CD8-positive, alpha-beta memory T cell (primary cell): ENCODE measurements at regions of chr12 and their contacts with region 1.

Region 1: GRCh38 chr12:101839324-101840283 is 8.8 kb upstream of the GNPTAB start:
- DNase-seq: peak; percentile 46 to 78 (median 59)
- H3K4me3 ChIP-seq: no peak overlapping the region
- H3K4me3 Mint-ChIP-seq: peak overlapping the region in 2 of 7 donors; percentile 42 to 52
- H3K27ac ChIP-seq: no peak overlapping the region
- H3K27ac Mint-ChIP-seq: peak overlapping the region in 3 of 8 donors; percentile 76 to 84 (median 79)
- H3K4me1 ChIP-seq: peaks cover 11% of the 10 kb centered on the region
- H3K4me1 Mint-ChIP-seq: peaks cover 10 to 19% (median 18%) of the 10 kb centered on the region in 3 donors
- H3K27me3 ChIP-seq: no peaks in the 10 kb centered on the region
- H3K27me3 Mint-ChIP-seq: peaks cover 0 to 3% of the 10 kb centered on the region in 2 donors

Region 2: GRCh38 chr12:101773650-101774162 is 65.9 kb before region 1 on chr12:
- CTCF ChIA-PET with region 1: interaction called, 119 read pairs
- POLR2A ChIA-PET with region 1: no interaction called
- DNase-seq: peak; percentile 43 to 75 (median 62)
- H3K4me3 ChIP-seq: no peak overlapping the region
- H3K4me3 Mint-ChIP-seq: no peak overlapping the region
- H3K27ac ChIP-seq: no peak overlapping the region
- H3K27ac Mint-ChIP-seq: peak overlapping the region in 1 of 8 donors; percentile 43
- H3K4me1 ChIP-seq: no peaks in the 10 kb centered on the region
- H3K4me1 Mint-ChIP-seq: peaks cover 0 to 7% (median 1%) of the 10 kb centered on the region in 3 donors
- H3K27me3 ChIP-seq: no peaks in the 10 kb centered on the region
- H3K27me3 Mint-ChIP-seq: no peaks in the 10 kb centered on the region

Region 3: GRCh38 chr12:101782273-101782731 is 57.3 kb before region 1 on chr12:
- CTCF ChIA-PET with region 1: interaction called, 35 read pairs
- POLR2A ChIA-PET with region 1: no interaction called
- DNase-seq: no peak
- H3K4me3 ChIP-seq: no peak overlapping the region
- H3K4me3 Mint-ChIP-seq: no peak overlapping the region
- H3K27ac ChIP-seq: no peak overlapping the region
- H3K27ac Mint-ChIP-seq: peak overlapping the region in 5 of 8 donors; percentile 2 to 63 (median 45)
- H3K4me1 ChIP-seq: no peaks in the 10 kb centered on the region
- H3K4me1 Mint-ChIP-seq: peaks cover 5 to 12% (median 6%) of the 10 kb centered on the region in 3 donors
- H3K27me3 ChIP-seq: no peaks in the 10 kb centered on the region
- H3K27me3 Mint-ChIP-seq: no peaks in the 10 kb centered on the region

Region 4: DNA sequence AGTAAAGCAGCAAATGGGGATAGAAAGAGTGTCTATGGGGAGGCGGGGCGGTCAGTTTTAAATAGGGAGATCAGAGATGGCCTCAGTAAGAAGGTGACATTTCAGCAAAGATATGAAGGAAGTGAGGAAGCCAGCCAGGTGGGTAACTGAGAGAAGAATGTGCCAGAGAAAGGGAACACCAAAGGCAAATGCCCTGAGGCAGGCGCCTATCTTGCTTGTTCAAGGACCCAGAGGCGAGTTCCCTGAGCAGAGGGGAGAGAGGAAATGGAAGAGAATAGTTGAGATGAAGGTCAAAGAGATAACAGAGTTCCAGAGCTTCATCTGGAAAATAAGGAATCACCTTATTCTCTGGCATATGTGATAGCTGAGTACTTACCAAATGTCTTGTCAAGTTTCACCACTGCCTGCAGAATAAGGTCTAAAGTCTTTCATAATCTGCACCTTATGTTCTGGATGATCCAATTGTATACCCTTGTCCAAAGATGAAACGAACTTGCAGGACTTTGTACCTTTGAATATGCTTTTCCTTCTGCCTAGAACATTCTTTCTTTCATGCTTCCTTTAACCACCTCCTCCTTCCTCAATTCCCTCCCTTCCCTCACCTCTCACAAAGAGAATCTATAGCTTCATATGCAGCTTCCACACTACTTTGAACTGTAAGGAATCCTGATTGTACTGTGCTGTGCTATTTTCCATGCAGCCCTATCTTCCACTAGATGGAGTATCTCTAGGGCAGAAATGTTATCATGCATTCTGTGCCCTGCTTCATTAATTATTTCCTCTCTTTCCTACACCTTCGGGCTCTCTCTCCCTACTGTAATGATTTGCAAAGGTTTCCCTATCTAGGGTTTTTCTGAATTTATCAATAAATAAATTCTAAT is 47.3 kb before region 1 on chr12:
- CTCF ChIA-PET with region 1: interaction called, 36 read pairs
- POLR2A ChIA-PET with region 1: no interaction called
- DNase-seq: no peak
- H3K4me3 ChIP-seq: no peak overlapping the region
- H3K4me3 Mint-ChIP-seq: peak overlapping the region in 2 of 7 donors; percentile 12 to 45
- H3K27ac ChIP-seq: no peak overlapping the region
- H3K27ac Mint-ChIP-seq: peak overlapping the region in 7 of 8 donors; percentile 10 to 84 (median 62)
- H3K4me1 ChIP-seq: peaks cover 7% of the 10 kb centered on the region
- H3K4me1 Mint-ChIP-seq: peaks cover 25 to 39% (median 32%) of the 10 kb centered on the region in 3 donors
- H3K27me3 ChIP-seq: no peaks in the 10 kb centered on the region
- H3K27me3 Mint-ChIP-seq: no peaks in the 10 kb centered on the region

Region 5: GRCh38 chr12:101823891-101824290 is 15.7 kb before region 1 on chr12:
- CTCF ChIA-PET with region 1: interaction called, 67 read pairs
- POLR2A ChIA-PET with region 1: interaction called, 14 read pairs
- DNase-seq: peak; percentile 46 to 85 (median 75)
- H3K4me3 ChIP-seq: no peak overlapping the region
- H3K4me3 Mint-ChIP-seq: peak overlapping the region; percentile 7 to 80 (median 74)
- H3K27ac ChIP-seq: no peak overlapping the region
- H3K27ac Mint-ChIP-seq: peak overlapping the region; percentile 51 to 99 (median 84)
- H3K4me1 ChIP-seq: peaks cover 61% of the 10 kb centered on the region
- H3K4me1 Mint-ChIP-seq: peaks cover 63 to 85% (median 73%) of the 10 kb centered on the region in 3 donors
- H3K27me3 ChIP-seq: no peaks in the 10 kb centered on the region
- H3K27me3 Mint-ChIP-seq: no peaks in the 10 kb centered on the region